AG04449 (cell line): ENCODE measurements at regions of chr1 and their contacts with region 1.

Region 1: DNA sequence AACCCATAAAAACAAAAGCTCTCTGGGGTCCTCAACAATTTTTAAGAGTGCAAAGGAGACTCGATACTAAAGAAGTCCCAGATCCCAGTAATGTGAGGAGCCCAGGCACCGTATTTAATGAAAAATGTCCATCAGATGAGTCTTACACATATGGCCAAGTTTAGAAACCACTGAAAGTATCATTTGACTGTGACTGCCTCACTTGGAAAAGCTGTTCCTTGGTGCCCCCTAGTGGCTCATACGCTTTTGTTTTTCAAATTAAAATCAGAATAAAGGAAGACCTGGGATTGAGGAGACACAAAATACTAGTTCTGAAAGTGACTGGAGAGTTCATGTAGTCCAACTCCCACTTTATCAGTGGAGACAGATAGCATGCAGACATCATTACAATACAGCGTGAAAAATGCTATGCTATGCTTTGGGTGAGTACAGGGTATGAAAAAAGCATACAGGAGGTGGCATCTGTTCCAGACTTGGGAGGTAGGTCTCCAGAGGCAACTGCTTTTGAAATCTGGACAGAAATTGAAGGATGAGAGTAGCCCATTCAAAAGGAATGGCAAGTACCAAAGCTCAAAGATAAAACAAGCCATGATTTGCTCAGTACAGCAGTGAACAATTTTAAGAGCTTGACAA is 33.8 kb downstream of the GDAP2 start:
- DNase-seq: peak; percentile 71
- H3K4me3 ChIP-seq: no peak overlapping the region
- CTCF ChIP-seq: peak; percentile 64

Region 2: GRCh38 chr1:117527566-117528102 is 368.0 kb before region 1 on chr1:
- CTCF ChIA-PET with region 1: interaction called, 78 read pairs
- POLR2A ChIA-PET with region 1: no interaction called
- DNase-seq: no peak
- H3K4me3 ChIP-seq: no peak overlapping the region
- CTCF ChIP-seq: no peak

Region 3: GRCh38 chr1:117710710-117711109 is 184.9 kb before region 1 on chr1:
- CTCF ChIA-PET with region 1: interaction called, 38 read pairs
- POLR2A ChIA-PET with region 1: no interaction called
- DNase-seq: no peak
- H3K4me3 ChIP-seq: no peak overlapping the region
- CTCF ChIP-seq: peak; percentile 27

Region 4: DNA sequence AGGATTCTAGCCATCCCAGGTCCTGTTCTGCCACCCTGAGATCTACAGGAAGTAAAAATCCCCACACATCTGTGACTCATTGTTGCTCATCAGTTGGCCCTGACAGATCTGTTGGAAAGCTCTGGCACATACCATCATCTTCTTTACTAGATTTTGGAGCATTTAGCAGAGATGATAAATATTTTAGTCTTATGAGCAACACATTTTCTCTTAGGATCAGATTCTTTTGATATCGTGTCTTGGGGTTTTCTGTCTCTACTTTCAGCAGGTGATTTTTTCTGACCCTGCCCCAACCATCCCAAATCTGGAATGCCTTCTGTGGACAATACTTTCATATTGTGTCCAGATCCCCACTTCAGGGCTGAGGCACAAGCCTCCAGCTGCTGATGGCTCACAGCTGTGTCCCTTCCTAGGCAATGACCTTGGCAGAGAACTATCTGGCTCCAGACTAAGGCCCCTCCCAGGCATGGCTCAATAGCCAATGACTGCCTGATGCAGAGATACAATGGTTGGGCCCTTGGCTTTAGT is 69.0 kb before region 1 on chr1:
- CTCF ChIA-PET with region 1: interaction called, 12 read pairs
- POLR2A ChIA-PET with region 1: no interaction called
- DNase-seq: peak; percentile 67
- H3K4me3 ChIP-seq: no peak overlapping the region
- CTCF ChIP-seq: no peak

Region 5: DNA sequence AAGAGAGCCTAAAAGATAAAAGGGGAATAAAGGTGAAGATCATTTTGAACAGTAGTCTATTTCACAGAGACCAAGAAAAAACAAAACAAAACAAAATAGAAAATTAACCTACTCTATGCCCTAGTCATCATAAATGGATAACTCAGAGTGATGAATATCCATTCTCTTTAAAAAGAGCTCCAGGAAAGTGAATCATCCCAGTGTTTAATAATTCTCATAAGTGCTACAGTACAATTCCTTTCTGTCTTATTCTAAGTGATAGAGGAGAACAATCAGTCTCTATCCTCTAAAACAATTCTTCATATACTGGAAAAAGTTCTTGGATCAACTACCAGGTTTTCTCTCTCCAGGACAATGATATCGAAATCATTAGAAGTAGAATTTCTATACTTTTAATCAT is 12.0 kb before region 1 on chr1:
- CTCF ChIA-PET with region 1: interaction called, 41 read pairs
- POLR2A ChIA-PET with region 1: no interaction called
- DNase-seq: no peak
- H3K4me3 ChIP-seq: no peak overlapping the region
- CTCF ChIP-seq: no peak

Region 6: GRCh38 chr1:118136187-118136941 is 240.8 kb after region 1 on chr1:
- CTCF ChIA-PET with region 1: no interaction called
- POLR2A ChIA-PET with region 1: no interaction called
- DNase-seq: peak; percentile 58
- H3K4me3 ChIP-seq: peak overlapping the region; percentile 27
- CTCF ChIP-seq: no peak